CD4-positive, alpha-beta T cell (primary cell): ENCODE measurements at regions of chr5 and their contacts with region 1.

Region 1: GRCh38 chr5:157142317-157143126 is at the start of gene MED7:
- DNase-seq: peak; percentile 77 to 99 (median 88)
- ATAC-seq: peak; percentile 95
- H3K4me3 ChIP-seq: peak within 1 kb of the TSS; percentile 98
- H3K4me3 Mint-ChIP-seq: peak within 1 kb of the TSS; percentile 95
- H3K27ac ChIP-seq: peak within 1 kb of the TSS; percentile 88 to 94
- H3K27ac Mint-ChIP-seq: peak within 1 kb of the TSS; percentile 98
- H3K4me1 ChIP-seq: peaks cover 35% of the 10 kb centered on the region
- H3K4me1 Mint-ChIP-seq: peaks cover 57% of the 10 kb centered on the region
- H3K27me3 ChIP-seq: no peaks in the 10 kb centered on the region
- H3K27me3 Mint-ChIP-seq: no peaks in the 10 kb centered on the region
- CTCF ChIP-seq: no peak
- total RNA-seq, gene MED7: 7.0 to 8.7 TPM

Region 2: DNA sequence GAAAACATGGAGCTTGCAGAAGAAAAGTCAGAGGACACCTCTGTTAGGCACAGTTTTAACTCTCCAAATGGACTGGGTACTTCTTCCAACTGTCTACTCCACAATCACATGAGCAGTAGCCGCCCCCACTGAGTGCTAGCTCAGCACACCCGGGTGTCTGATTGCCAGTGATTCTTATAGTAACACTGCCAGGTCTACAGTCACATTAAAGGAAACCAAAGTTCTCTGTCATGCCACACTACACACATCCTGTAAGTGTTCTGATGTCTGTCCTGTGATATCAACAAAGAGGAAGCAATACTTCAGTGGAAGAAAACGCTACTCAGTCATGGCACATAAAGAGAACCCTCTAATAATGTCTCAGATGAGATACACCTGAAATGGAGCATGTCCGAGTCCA is 33.5 kb before region 1 on chr5 and contains the start of gene HAVCR2:
- CTCF ChIA-PET with region 1: no interaction called
- POLR2A ChIA-PET with region 1: interaction called, 30 read pairs
- intact Hi-C with region 1: no loop called
- DNase-seq: peak; percentile 2 to 86 (median 36)
- ATAC-seq: peak; percentile 94
- H3K4me3 ChIP-seq: peak within 1 kb of the TSS; percentile 40
- H3K4me3 Mint-ChIP-seq: peak within 1 kb of the TSS; percentile 84
- H3K27ac ChIP-seq: peak within 1 kb of the TSS; percentile 42 to 81
- H3K27ac Mint-ChIP-seq: peak within 1 kb of the TSS; percentile 87
- H3K4me1 ChIP-seq: peaks cover 34% of the 10 kb centered on the region
- H3K4me1 Mint-ChIP-seq: peaks cover 34% of the 10 kb centered on the region
- H3K27me3 ChIP-seq: no peaks in the 10 kb centered on the region
- H3K27me3 Mint-ChIP-seq: no peaks in the 10 kb centered on the region
- CTCF ChIP-seq: no peak
- total RNA-seq, gene HAVCR2: 1.4 to 1.8 TPM

Region 3: DNA sequence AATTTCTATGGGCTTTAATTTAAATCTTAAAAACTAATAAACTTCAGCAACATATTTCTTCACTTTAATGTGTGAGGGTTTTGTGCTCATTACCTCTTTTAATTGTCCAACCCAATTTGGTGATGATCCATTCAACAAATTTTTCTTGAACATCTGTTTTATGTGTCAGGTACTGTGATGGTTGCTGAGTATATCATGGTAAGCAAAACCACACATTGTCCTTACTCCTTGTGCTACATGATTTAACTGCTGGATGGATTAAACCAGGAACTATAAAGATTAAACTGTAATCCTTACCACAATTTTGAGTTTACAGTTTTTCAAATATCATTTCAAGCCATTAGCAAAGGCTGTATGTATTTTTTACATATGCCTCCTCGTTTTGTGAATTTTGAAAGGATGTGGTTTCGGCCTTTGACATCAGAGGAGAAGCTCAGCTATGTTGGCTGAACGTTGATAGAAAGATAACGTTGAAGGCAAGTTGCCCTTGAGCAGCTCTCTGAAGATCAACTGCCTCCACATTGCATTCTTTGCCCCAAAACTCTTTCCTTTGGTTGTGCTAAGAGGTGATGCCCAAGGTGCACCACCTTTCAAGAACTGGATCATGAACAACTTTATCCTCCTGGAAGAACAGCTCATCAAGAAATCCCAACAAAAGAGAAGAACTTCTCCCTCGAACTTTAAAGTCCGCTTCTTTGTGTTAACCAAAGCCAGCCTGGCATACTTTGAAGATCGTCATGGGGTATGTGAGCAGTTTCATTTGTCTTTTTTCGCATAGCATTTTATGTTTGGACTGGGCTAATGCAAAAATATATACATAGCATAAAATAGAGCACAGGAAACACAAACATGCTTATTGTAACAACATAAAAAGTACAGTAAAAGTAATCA is 38.1 kb after region 1 on chr5 and contains the start of gene ITK:
- CTCF ChIA-PET with region 1: no interaction called
- POLR2A ChIA-PET with region 1: interaction called, 19 read pairs
- intact Hi-C with region 1: no loop called
- DNase-seq: peak in 8 of 14 experiments; percentile 29 to 92 (median 53)
- ATAC-seq: peak; percentile 76
- H3K4me3 ChIP-seq: peak within 1 kb of the TSS; percentile 85
- H3K4me3 Mint-ChIP-seq: peak within 1 kb of the TSS; percentile 98
- H3K27ac ChIP-seq: peak within 1 kb of the TSS; percentile 69 to 74
- H3K27ac Mint-ChIP-seq: peak within 1 kb of the TSS; percentile 96
- H3K4me1 ChIP-seq: peaks cover 38% of the 10 kb centered on the region
- H3K4me1 Mint-ChIP-seq: peaks cover 57% of the 10 kb centered on the region
- H3K27me3 ChIP-seq: no peaks in the 10 kb centered on the region
- H3K27me3 Mint-ChIP-seq: no peaks in the 10 kb centered on the region
- CTCF ChIP-seq: no peak
- total RNA-seq, gene ITK: 289 to 292 TPM

Region 4: GRCh38 chr5:157219491-157220271 is 77.2 kb after region 1 on chr5:
- CTCF ChIA-PET with region 1: no interaction called
- POLR2A ChIA-PET with region 1: interaction called, 26 read pairs
- intact Hi-C with region 1: no loop called
- DNase-seq: no peak
- ATAC-seq: no peak
- H3K4me3 ChIP-seq: no peak overlapping the region
- H3K4me3 Mint-ChIP-seq: peak overlapping the region; percentile 27
- H3K27ac ChIP-seq: peak overlapping the region; percentile 70 to 72
- H3K27ac Mint-ChIP-seq: peak overlapping the region; percentile 80
- H3K4me1 ChIP-seq: peaks cover 99% of the 10 kb centered on the region
- H3K4me1 Mint-ChIP-seq: peaks cover 85% of the 10 kb centered on the region
- H3K27me3 ChIP-seq: no peaks in the 10 kb centered on the region
- H3K27me3 Mint-ChIP-seq: no peaks in the 10 kb centered on the region
- CTCF ChIP-seq: no peak

Region 5: DNA sequence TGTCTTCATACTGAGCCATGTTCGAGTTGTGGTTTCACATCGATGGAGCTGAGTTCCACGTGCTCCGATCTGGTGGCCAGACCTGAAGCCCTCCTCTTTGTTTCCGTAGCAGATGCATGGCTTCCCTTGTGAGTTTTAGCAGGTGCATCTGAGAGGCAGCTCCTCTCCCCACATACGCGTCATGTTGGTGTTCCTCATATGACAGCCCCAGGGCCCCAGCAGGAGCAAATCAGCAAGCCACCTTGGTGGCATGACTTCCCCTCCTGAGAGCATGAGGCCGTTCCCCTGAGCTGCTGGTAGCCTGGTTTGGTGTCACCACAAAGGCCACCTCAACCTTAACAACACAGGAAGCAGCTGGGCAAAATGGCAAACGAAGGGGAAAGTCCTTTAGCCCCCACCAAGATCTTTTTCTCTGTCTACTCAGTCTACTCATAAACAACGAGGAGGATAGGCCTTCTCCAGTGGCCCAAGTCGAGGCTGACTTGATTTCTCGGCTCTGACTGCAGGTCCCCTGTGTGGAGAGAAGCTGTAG is 129.3 kb after region 1 on chr5:
- CTCF ChIA-PET with region 1: no interaction called
- POLR2A ChIA-PET with region 1: interaction called, 60 read pairs
- intact Hi-C with region 1: no loop called
- DNase-seq: peak; percentile 74 to 97 (median 80)
- ATAC-seq: peak; percentile 90
- H3K4me3 ChIP-seq: peak overlapping the region; percentile 8
- H3K4me3 Mint-ChIP-seq: peak overlapping the region; percentile 80
- H3K27ac ChIP-seq: peak overlapping the region; percentile 81 to 94
- H3K27ac Mint-ChIP-seq: peak overlapping the region; percentile 93
- H3K4me1 ChIP-seq: peaks cover 74% of the 10 kb centered on the region
- H3K4me1 Mint-ChIP-seq: peaks cover 96% of the 10 kb centered on the region
- H3K27me3 ChIP-seq: no peaks in the 10 kb centered on the region
- H3K27me3 Mint-ChIP-seq: no peaks in the 10 kb centered on the region
- CTCF ChIP-seq: no peak

Region 6: GRCh38 chr5:157731272-157732129 is 589.0 kb after region 1 on chr5 and contains the start of gene THG1L:
- CTCF ChIA-PET with region 1: no interaction called
- POLR2A ChIA-PET with region 1: interaction called, 13 read pairs
- intact Hi-C with region 1: loop called in 1 of 2 experiments (anchors 5 kb)
- DNase-seq: peak; percentile 94 to 99 (median 97)
- ATAC-seq: peak; percentile 97
- H3K4me3 ChIP-seq: peak within 1 kb of the TSS; percentile 90
- H3K4me3 Mint-ChIP-seq: peak within 1 kb of the TSS; percentile 94
- H3K27ac ChIP-seq: peak within 1 kb of the TSS; percentile 79 to 89
- H3K27ac Mint-ChIP-seq: peak within 1 kb of the TSS; percentile 91
- H3K4me1 ChIP-seq: peaks cover 9% of the 10 kb centered on the region
- H3K4me1 Mint-ChIP-seq: peaks cover 16% of the 10 kb centered on the region
- H3K27me3 ChIP-seq: no peaks in the 10 kb centered on the region
- H3K27me3 Mint-ChIP-seq: no peaks in the 10 kb centered on the region
- CTCF ChIP-seq: no peak
- total RNA-seq, gene THG1L: 4.1 to 4.6 TPM